MCF 10A (cell line): ENCODE measurements at regions of chr10 and their contacts with region 1.

Region 1: GRCh38 chr10:22573820-22574569 is 140.4 kb downstream of the PIP4K2A start:
- DNase-seq: peak; percentile 25
- H3K4me3 Mint-ChIP-seq: no peak overlapping the region
- H3K27ac Mint-ChIP-seq: no peak overlapping the region
- H3K4me1 Mint-ChIP-seq: no peaks in the 10 kb centered on the region
- H3K27me3 Mint-ChIP-seq: no peaks in the 10 kb centered on the region
- CTCF ChIP-seq: peak; percentile 33

Region 2: DNA sequence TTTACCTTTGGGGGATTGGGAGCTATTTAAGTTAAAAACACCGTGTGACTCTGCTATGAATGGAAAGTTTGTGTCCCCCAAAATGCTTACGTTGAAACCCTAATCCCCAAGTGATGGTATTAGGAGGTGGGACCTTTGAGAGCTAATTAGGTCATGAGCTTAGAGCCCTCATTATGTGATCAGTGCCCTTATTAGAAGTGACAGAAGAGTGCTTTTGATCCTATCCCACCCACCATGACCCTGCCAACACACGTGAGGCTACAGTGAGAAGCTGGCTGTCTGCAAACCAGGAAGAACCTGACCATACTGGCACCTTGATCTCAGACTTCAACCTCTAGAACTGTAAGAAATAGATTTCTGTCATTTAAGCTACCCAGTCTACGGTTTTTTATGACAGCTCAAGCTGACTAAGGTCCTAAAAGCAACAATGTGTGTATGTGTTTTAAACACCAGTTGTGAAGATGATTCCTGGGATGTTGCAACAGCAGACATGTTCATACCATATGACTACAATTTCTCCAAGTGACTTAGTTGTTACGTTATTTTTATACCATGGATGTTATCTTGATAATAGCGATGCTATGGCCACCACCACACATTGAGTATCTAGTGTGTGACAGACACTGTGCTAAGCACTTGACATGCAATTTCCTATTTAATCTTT is 16.0 kb after region 1 on chr10:
- CTCF ChIA-PET with region 1: interaction called, 16 read pairs
- POLR2A ChIA-PET with region 1: no interaction called
- intact Hi-C with region 1: no loop called
- DNase-seq: no peak
- H3K4me3 Mint-ChIP-seq: no peak overlapping the region
- H3K27ac Mint-ChIP-seq: no peak overlapping the region
- H3K4me1 Mint-ChIP-seq: no peaks in the 10 kb centered on the region
- H3K27me3 Mint-ChIP-seq: no peaks in the 10 kb centered on the region
- CTCF ChIP-seq: no peak

Region 3: DNA sequence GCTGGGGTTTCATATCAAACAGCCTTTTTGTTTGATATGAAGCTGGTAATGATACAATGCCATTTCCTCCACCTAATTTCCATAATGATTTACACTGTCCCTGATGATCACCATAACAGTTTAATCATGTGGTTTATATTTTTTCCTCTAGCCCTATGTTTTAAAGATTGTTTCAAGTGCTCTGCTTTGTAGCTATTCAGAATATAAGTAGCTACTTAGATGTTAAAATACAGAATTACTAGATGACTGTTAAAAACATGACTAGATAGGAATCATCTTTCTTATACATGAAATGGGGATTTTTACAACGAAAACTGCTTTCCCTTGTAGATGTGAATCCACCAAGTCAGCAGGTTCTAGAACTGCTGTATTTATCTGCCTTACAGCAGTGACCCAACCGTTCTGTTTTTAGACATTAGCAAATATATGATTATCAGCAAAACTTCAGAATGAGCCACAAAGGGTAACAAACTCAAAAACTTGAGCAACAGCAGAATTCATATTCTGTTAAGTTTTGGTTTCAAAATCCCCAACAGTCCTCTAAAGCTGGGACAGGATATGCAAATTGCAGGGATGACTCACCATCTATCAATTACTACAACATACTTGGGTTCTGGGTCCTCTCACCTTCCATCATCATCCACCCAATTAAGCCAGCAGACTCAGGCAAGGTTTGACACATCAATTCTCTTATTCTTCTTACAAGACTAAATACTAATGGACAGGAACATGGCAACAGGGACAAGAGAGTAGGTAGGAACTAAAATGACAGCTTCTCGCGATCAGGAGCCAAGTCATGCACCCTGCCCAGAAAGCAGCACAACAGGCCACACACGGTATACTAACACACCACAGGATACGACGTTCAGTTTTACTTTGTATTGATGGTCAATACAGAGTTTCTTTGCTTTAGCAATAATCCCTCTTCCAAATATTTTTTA is 56.5 kb after region 1 on chr10:
- CTCF ChIA-PET with region 1: no interaction called
- POLR2A ChIA-PET with region 1: no interaction called
- intact Hi-C with region 1: no loop called
- DNase-seq: peak; percentile 47
- H3K4me3 Mint-ChIP-seq: no peak overlapping the region
- H3K27ac Mint-ChIP-seq: no peak overlapping the region
- H3K4me1 Mint-ChIP-seq: peaks cover 21% of the 10 kb centered on the region
- H3K27me3 Mint-ChIP-seq: no peaks in the 10 kb centered on the region
- CTCF ChIP-seq: no peak